Activated CD4-positive, alpha-beta memory T cell treated with anti-CD3 and anti-CD28 coated beads for 36 hours (primary cell): ENCODE measurements at regions of chr6 and their contacts with region 1.

Region 1: GRCh38 chr6:99151634-99152344 is 197.7 kb downstream of the FAXC start:
- DNase-seq: peak; percentile 61
- H3K4me3 Mint-ChIP-seq: no peak overlapping the region
- H3K27ac Mint-ChIP-seq: no peak overlapping the region
- H3K4me1 Mint-ChIP-seq: no peaks in the 10 kb centered on the region
- H3K27me3 Mint-ChIP-seq: peaks cover 6% of the 10 kb centered on the region

Region 2: DNA sequence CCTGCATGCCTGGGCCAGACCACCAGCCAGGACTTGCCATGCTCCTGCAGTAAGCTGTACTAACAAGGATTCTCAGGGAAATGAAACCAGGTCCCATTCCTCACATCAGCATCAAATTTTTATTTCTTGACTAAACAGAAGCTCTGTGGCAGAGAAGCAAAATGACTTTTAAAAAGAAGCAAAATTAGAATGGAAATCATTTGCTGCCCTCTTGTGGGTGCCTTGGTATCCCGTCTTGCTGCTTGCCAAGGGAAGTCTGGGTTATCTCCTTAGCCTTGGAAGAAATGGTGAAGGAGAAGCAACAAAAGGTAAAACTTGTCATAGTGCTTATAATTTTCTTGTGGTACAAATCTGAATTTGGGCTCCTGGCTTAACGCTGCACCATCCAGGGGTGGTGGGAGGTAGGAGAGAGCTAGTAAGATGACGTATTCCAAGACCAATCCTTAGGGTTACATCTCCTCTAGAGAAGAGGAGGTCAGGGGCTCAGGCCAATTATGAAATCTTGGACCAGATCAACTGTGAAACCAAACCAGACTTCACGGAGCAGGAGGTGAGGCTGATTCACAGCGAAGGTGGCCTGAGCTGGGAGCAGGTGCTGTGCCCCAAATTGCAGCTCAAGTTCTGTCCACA is 90.2 kb after region 1 on chr6:
- CTCF ChIA-PET with region 1: interaction called, 24 read pairs
- POLR2A ChIA-PET with region 1: no interaction called
- intact Hi-C with region 1: no loop called
- DNase-seq: no peak
- H3K4me3 Mint-ChIP-seq: no peak overlapping the region
- H3K27ac Mint-ChIP-seq: no peak overlapping the region
- H3K4me1 Mint-ChIP-seq: no peaks in the 10 kb centered on the region
- H3K27me3 Mint-ChIP-seq: peaks cover 6% of the 10 kb centered on the region